GM13976 (cell line): ENCODE measurements at regions of chr15 and their contacts with region 1.

Region 1: GRCh38 chr15:31435261-31435911 is 108.8 kb downstream of the KLF13 start:
- DNase-seq: peak; percentile 84
- CTCF ChIP-seq: peak; percentile 86

Region 2: DNA sequence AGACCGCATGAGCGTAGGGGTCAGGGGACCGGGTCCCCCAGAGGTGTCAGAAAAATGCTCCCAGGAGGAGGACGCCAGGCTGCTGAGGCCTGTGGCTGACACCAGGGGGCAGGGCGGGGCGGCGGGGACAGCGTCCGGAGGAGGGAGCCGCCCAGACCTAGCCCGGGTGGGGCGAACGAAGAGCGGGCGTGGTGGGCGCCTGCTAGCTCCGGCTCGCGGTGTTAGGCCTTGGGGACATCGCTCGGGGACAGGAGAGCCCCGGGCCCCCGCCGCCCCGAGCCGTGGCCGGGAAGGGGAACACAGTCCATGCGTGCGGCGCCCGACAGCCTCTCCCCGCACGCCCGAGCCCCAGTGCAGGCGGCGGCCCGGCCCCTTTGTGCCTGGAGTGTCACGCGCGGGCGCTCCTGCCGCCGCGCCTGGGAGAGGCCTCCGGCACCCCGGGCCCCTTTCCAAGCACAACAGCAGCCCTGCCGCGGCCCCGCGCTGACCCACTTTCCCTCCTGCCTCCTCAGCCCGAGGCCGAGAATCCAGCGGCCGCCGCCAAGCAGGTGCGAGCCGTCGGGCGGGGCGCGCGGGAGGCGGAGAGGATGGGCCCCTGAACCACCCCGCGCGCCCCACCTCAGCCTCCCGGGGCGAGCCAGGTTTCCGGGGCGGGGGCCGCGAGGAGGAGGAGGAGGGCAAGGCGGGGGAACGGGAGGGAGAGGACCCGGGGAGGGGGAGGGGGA is 219.7 kb before region 1 on chr15:
- in situ Hi-C with region 1: loop called (anchors 25 kb)
- DNase-seq: peak; percentile 93
- CTCF ChIP-seq: peak; percentile 84